ENCODE measurements at regions of chr19 and their contacts with region 1.

Region 1: GRCh38 chr19:48872182-48872883 is at the start of gene PPP1R15A:
- DNase-seq: peak; percentile 100
- H3K4me3 Mint-ChIP-seq: peak within 1 kb of the TSS; percentile 100
- H3K27ac Mint-ChIP-seq: peak within 1 kb of the TSS; percentile 100
- H3K4me1 Mint-ChIP-seq: peaks cover 39% of the 10 kb centered on the region
- H3K27me3 Mint-ChIP-seq: peaks cover 5% of the 10 kb centered on the region
- total RNA-seq, gene PPP1R15A: 40.5 and 42.1 TPM in 2 replicates

Region 2: GRCh38 chr19:48858984-48859710 is 13.2 kb before region 1 on chr19:
- intact Hi-C with region 1: loop called (anchors 1 kb)
- DNase-seq: peak; percentile 93
- H3K4me3 Mint-ChIP-seq: peak overlapping the region; percentile 89
- H3K27ac Mint-ChIP-seq: peak overlapping the region; percentile 84
- H3K4me1 Mint-ChIP-seq: peaks cover 5% of the 10 kb centered on the region
- H3K27me3 Mint-ChIP-seq: no peaks in the 10 kb centered on the region

Region 3: DNA sequence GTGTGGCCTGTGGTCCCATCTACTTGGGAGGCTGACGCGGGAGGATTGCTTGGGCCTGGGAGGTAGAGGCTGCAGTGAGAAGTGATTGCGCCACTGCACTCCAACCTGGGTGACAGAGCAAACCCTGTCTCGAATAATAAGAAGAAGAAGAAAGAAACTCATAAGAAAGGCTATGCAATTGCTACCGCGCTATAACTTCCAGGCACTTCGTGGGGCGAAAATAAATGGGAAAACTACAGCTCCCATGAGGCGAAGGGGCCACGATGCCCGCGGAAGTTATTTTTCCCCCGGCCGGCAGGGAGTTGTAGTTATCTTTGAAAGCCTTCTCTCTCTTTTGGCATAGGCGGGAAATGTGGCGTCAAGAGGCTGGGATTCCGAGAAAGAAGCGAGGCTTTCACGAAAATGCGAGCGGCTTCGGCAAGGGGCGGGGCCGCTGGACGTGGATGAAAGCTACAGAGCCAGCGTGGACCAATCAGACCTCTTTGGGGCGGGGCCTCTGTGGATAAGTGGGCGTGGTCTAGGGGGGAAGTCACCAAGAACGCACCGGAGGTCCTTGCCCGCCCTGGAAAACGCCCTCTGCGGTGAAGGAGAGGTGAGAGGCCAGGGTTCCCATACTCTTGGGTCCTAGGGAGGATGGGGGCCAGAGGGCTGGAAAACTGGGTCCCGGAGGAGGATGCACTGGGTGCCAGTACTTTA is 27.6 kb after region 1 on chr19 and contains the start of gene NUCB1:
- intact Hi-C with region 1: loop called (anchors 1 kb)
- DNase-seq: peak; percentile 100
- H3K4me3 Mint-ChIP-seq: peak within 1 kb of the TSS; percentile 98
- H3K27ac Mint-ChIP-seq: peak within 1 kb of the TSS; percentile 95
- H3K4me1 Mint-ChIP-seq: peaks cover 26% of the 10 kb centered on the region
- H3K27me3 Mint-ChIP-seq: peaks cover 4% of the 10 kb centered on the region
- total RNA-seq, gene NUCB1: 116 and 117 TPM in 2 replicates

Region 4: DNA sequence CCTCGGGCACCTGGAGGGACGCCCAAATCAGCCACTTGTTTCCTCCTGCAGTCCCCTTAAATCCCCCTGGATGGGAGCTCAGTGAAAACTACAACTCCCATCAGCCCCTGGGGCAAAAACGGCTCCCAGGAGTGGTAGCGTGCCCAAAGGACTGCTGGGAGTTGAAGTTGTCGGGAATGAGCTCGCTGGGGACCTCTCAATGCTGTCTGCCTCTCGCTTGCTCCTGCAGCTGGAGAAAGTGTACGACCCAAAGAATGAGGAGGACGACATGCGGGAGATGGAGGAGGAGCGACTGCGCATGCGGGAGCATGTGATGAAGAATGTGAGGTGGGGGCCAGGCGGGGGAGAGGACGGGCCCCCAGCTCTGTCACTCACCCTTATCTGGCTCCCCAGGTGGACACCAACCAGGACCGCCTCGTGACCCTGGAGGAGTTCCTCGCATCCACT is 46.5 kb after region 1 on chr19:
- intact Hi-C with region 1: no loop called
- DNase-seq: peak; percentile 71
- H3K4me3 Mint-ChIP-seq: no peak overlapping the region
- H3K27ac Mint-ChIP-seq: no peak overlapping the region
- H3K4me1 Mint-ChIP-seq: no peaks in the 10 kb centered on the region
- H3K27me3 Mint-ChIP-seq: no peaks in the 10 kb centered on the region

Region 5: DNA sequence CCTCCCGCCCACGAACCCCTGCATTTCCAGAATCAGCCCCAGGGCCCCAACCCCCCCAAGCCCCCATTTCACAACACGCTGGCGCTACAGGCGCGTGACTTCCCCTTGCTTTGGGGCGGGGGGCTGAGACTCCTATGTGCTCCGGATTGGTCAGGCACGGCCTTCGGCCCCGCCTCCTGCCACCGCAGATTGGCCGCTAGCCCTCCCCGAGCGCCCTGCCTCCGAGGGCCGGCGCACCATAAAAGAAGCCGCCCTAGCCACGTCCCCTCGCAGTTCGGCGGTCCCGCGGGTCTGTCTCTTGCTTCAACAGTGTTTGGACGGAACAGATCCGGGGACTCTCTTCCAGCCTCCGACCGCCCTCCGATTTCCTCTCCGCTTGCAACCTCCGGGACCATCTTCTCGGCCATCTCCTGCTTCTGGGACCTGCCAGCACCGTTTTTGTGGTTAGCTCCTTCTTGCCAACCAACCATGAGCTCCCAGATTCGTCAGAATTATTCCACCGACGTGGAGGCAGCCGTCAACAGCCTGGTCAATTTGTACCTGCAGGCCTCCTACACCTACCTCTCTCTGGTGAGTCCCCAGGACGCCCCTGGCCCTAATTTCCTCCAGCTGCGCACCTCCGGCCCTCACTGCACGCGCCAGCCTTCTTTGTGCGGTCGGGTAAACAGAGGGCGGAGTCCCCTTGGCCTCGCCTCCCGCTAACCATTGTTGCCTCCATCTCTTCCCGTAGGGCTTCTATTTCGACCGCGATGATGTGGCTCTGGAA is 92.9 kb after region 1 on chr19 and contains the start of gene FTL:
- intact Hi-C with region 1: loop called (anchors 1 kb)
- DNase-seq: peak; percentile 98
- H3K4me3 Mint-ChIP-seq: peak within 1 kb of the TSS; percentile 100
- H3K27ac Mint-ChIP-seq: peak within 1 kb of the TSS; percentile 99
- H3K4me1 Mint-ChIP-seq: peaks cover 58% of the 10 kb centered on the region
- H3K27me3 Mint-ChIP-seq: no peaks in the 10 kb centered on the region
- total RNA-seq, gene FTL: 696 and 697 TPM in 2 replicates

Region 6: DNA sequence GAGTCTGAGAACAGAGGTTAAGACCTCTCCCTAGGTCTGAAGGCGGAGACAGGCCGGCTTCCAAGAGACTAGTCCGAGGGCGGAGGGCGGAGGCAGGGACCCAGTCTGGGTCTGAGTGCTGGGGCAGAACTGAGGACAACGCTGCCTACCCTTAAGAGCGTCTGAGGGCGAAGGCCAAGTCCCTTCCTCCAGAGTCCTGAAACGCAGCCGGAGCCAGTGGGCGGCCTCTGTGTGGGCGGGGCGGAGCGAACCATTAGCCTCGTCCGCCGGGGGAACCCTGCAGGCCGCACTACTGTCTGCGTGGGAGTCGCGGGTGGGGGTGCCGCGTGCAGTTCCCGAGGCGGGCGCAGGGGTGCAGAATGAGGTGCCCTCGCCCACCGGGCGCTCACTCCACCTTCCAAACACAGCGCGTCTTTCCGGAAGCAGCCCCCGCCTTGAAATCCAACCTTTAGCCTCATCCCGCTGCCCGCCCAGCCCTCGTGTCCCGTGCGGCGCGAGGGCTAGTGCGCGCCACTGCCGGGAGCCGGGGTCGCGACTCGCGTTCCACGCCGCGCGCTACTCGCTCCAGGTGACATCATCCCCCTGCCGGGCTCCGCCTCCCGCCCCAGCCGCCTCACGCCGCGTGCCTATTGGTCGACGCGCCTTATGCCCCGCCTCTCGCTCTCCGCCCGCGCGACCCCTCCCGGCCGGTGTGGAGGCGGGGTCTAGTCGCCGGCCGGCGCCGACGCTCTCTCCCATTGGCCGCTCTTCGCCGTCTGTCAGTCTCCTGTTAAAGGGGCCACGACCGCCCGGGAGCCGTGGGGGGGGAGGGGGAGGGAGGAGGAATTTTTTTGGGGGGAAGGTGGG is 246.5 kb after region 1 on chr19 and contains the start of gene C19orf73:
- intact Hi-C with region 1: loop called (anchors 2 kb)
- DNase-seq: peak; percentile 99
- H3K4me3 Mint-ChIP-seq: peak within 1 kb of the TSS; percentile 90
- H3K27ac Mint-ChIP-seq: peak within 1 kb of the TSS; percentile 90
- H3K4me1 Mint-ChIP-seq: peaks cover 25% of the 10 kb centered on the region
- H3K27me3 Mint-ChIP-seq: peaks cover 18% of the 10 kb centered on the region
- total RNA-seq, gene C19orf73: 2.0 and 2.5 TPM in 2 replicates